ENCODE measurements at regions of chr10 and their contacts with region 1.

Region 1: GRCh38 chr10:71888623-71889387 is 37.8 kb upstream of the PSAP start:
- DNase-seq: peak; percentile 97
- H3K4me3 ChIP-seq: peak overlapping the region; percentile 57 to 64 (median 62)
- H3K27ac ChIP-seq: peak overlapping the region; percentile 76 to 91 (median 85)
- H3K4me1 ChIP-seq: peaks cover 9 to 29% (median 25%) of the 10 kb centered on the region in 4 donors
- H3K27me3 ChIP-seq: no peaks in the 10 kb centered on the region
- CTCF ChIP-seq: no peak
- EP300 ChIP-seq: no peak
- POLR2A ChIP-seq: peak; percentile 71

Region 2: DNA sequence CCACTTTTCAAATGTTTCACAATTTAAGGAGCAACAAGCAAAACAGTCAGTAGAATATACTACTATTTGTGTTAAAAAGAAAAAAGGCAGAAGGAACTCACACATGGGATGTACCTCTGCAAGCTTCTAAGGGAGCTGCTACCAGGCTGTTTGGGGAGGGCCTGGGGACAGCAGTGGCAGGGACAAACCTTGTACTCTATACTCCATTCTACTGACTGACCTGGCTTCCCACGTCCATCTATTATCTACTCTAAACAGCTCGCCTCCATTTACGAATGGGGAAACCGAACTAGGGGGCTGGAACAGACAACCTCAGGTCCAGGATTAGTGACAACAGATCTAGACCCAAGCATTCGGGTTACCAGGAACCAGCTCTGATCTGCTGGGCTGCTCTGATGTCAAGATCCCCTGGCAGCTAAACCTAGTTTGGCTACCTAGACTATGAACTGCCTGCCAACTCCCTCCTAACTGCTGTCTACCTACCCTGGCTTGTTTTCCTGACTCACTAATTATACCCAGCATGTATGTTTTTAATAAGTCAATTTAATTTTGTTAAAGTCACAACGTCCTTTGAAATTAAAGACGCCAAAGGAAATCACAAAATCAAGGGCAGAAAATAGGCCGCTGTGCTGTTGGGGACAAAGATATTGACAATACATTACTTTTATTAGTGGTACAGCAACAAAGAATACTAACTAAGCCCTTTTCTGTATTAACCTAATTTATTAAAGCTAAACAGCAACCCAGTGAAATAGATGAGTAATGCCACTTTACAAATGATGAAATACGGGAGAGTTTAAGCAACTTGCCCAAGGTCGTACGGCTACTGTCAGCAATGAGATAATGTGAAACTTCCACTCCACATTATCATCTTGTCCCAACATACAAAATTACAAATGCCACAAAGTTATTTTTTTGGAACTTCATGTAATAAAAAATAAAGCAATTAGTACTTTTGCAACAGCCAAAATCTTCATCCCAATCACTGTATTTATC is 43.1 kb before region 1 on chr10:
- intact Hi-C with region 1: loop called (anchors 5 kb)
- DNase-seq: no peak
- H3K4me3 ChIP-seq: no peak overlapping the region
- H3K27ac ChIP-seq: peak overlapping the region in 1 of 4 donors; percentile 36
- H3K4me1 ChIP-seq: peaks cover 66 to 92% (median 87%) of the 10 kb centered on the region in 4 donors
- H3K27me3 ChIP-seq: no peaks in the 10 kb centered on the region
- CTCF ChIP-seq: no peak
- EP300 ChIP-seq: no peak
- POLR2A ChIP-seq: no peak

Region 3: DNA sequence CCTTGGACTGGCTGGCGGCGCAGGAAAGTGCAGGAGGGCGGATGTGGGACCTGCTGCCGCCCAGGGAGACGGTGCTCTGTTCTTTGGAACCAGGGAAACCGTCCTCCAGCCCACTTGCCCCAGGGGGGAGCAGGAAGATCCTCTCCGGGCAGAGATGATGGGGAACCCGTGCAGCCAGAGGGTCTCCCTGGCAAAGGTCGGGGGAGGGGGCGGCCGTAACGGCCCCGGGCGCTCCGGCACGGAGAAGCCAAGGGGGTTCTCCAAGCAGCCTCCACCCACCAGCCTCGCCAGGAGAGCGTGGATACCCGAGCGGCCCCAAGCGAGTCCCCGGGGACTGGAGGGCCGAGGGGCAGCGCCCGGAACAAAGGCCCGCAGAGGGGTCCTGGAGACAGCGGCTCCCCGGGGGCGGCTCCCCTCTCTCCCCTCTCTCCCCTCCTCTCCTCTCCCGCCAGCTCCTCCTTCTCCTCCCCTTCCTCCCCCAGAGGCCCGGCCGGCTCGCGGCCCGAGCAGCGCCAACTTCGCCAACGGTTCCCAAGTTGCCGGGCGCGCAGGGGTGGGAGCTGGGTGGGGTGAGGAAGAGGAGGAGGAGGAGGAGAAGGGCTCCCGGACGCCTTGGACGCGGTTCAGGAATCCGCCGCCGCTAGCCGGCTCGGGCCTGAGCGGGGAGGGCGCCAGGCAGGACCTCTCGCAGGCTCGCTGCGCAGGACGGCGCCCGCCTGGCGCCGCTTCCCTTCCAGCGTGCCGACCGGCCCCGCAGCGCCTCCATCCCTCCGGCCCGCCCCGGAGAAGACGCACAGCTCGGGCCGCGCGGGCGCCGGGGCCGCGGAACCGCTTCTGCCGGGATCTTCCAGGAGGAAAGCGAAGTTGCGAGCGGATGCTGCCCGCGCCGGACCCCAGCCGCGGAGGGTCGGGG is 75.2 kb after region 1 on chr10 and contains the start of gene CHST3:
- intact Hi-C with region 1: no loop called
- DNase-seq: no peak
- H3K4me3 ChIP-seq: peak within 1 kb of the TSS; percentile 68 to 94 (median 78)
- H3K27ac ChIP-seq: peak within 1 kb of the TSS; percentile 94 to 100 (median 98)
- H3K4me1 ChIP-seq: peaks cover 42 to 62% (median 57%) of the 10 kb centered on the region in 4 donors
- H3K27me3 ChIP-seq: no peaks in the 10 kb centered on the region
- CTCF ChIP-seq: no peak
- EP300 ChIP-seq: no peak
- POLR2A ChIP-seq: no peak
- total RNA-seq, gene CHST3: 24.1 to 43.0 (median 38.7) TPM

Measured in esophagus muscularis mucosa (tissue), 4 donors.